ENCODE measurements at regions of chr6 and their contacts with region 1.

Region 1: DNA sequence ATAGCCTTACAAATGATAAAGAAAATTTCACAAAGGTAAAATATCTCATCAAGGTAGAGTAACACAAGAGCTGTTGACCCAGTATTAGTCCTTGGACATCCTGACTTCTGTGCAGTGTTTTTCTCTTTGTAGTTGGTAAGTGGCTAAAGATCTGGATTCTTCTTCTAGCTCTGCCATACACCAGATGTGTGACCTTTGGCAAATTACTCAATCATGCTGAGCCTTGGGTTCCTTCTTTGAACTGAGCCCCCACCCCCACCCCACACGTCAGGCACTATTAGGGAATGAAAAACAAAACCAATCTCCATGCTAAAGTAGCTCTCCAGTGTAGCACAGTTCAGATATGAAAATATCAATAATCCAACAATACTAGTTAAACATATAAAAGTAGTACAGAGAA is 15.1 kb upstream of the TRIM39 start:
- DNase-seq: no peak
- ATAC-seq: no peak
- H3K4me3 ChIP-seq: no peak overlapping the region
- H3K4me3 Mint-ChIP-seq: no peak overlapping the region
- H3K27ac ChIP-seq: no peak overlapping the region
- H3K27ac Mint-ChIP-seq: no peak overlapping the region
- H3K4me1 ChIP-seq: peaks cover under 1% of the 10 kb centered on the region
- H3K4me1 Mint-ChIP-seq: peaks cover 59% of the 10 kb centered on the region
- H3K27me3 ChIP-seq: no peaks in the 10 kb centered on the region
- H3K27me3 Mint-ChIP-seq: no peaks in the 10 kb centered on the region
- CTCF ChIP-seq: no peak

Region 2: GRCh38 chr6:30259140-30260035 is 52.3 kb before region 1 on chr6:
- CTCF ChIA-PET with region 1: no interaction called
- POLR2A ChIA-PET with region 1: no interaction called
- intact Hi-C with region 1: loop called in 1 of 2 experiments (anchors 2 kb)
- DNase-seq: peak; percentile 24 to 91 (median 60)
- ATAC-seq: peak; percentile 84
- H3K4me3 ChIP-seq: peak overlapping the region; percentile 78 to 88
- H3K4me3 Mint-ChIP-seq: peak overlapping the region; percentile 92
- H3K27ac ChIP-seq: peak overlapping the region; percentile 53 to 77
- H3K27ac Mint-ChIP-seq: peak overlapping the region; percentile 80
- H3K4me1 ChIP-seq: peaks cover 6% of the 10 kb centered on the region
- H3K4me1 Mint-ChIP-seq: peaks cover 19% of the 10 kb centered on the region
- H3K27me3 ChIP-seq: no peaks in the 10 kb centered on the region
- H3K27me3 Mint-ChIP-seq: no peaks in the 10 kb centered on the region
- CTCF ChIP-seq: peak; percentile 23

Region 3: GRCh38 chr6:30626484-30627366 is 315.1 kb after region 1 on chr6 and contains the start of gene ATAT1:
- CTCF ChIA-PET with region 1: no interaction called
- POLR2A ChIA-PET with region 1: no interaction called
- intact Hi-C with region 1: no loop called
- DNase-seq: peak; percentile 78 to 95 (median 92)
- ATAC-seq: peak; percentile 99
- H3K4me3 ChIP-seq: peak within 1 kb of the TSS; percentile 68 to 78
- H3K4me3 Mint-ChIP-seq: peak within 1 kb of the TSS; percentile 89
- H3K27ac ChIP-seq: peak within 1 kb of the TSS; percentile 85 to 94
- H3K27ac Mint-ChIP-seq: peak within 1 kb of the TSS; percentile 97
- H3K4me1 ChIP-seq: peaks cover 16% of the 10 kb centered on the region
- H3K4me1 Mint-ChIP-seq: peaks cover 29% of the 10 kb centered on the region
- H3K27me3 ChIP-seq: no peaks in the 10 kb centered on the region
- H3K27me3 Mint-ChIP-seq: no peaks in the 10 kb centered on the region
- CTCF ChIP-seq: peak; percentile 61
- total RNA-seq, gene ATAT1: 4.2 to 6.8 TPM